ENCODE measurements at regions of chr1 and their contacts with region 1.

Region 1: DNA sequence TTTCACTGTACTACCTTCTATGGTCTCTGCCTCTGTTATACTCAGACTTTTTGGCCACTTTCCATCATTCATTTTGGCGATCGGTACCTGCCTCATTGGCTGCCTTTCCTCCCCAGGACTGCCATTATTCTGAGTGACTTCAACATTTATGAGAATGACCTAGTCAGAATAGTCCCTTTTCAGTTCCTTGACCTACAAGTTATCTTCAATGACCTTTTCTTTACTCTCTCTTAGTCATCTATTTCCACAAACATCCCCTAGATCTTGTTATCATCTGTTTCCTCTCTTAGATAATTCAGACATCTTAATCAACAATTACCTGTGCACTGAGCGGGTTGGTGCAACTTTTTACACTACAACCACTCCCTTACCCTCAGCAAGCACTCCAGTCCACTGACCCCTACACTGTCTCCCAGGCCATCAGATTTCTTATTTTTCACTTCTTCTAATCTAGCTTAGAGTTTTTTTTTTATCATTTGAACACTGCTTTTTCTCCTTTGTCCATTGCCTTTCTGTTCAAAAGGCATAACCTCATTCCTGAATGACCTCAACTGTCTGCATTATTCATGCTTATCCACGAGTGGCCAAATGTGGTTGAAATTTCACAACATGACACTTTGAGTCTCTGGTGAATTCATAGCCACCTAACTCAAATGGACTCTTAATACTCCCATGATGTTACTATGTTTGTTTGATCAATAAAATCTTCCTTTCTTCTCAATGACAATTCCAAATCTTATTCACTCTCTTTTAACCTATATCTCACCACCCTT is 112.7 kb downstream of the HMCN1 start:
- DNase-seq: no peak
- ATAC-seq: peak in 1 of 4 donors; percentile 27
- H3K4me3 ChIP-seq: no peak overlapping the region
- H3K27ac ChIP-seq: no peak overlapping the region
- H3K4me1 ChIP-seq: peaks cover 0 to 20% (median 0%) of the 10 kb centered on the region in 12 donors
- H3K27me3 ChIP-seq: no peaks in the 10 kb centered on the region
- CTCF ChIP-seq: no peak
- POLR2A ChIP-seq: no peak

Region 2: DNA sequence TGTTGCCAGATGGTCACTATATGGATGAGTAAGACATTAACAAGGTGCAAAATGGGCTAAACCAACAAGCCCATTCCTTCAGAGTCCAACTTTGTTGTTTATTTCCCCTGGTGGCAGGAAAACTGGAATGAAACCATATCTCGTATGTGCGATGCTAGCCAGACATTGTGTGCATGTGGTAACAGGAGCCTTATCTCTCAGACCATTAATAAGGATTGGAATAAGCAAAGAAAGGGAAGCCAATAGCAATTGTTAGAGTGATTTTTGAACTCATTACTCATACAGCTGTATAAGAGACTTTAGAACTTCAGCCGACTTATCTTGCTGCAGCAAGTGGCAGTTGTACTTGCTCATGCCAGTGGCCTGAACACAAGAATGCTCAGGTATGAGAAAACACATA is 142.7 kb before region 1 on chr1:
- intact Hi-C with region 1: no loop called
- DNase-seq: no peak
- ATAC-seq: no peak
- H3K4me3 ChIP-seq: no peak overlapping the region
- H3K27ac ChIP-seq: no peak overlapping the region
- H3K4me1 ChIP-seq: no peaks in the 10 kb centered on the region
- H3K27me3 ChIP-seq: no peaks in the 10 kb centered on the region
- CTCF ChIP-seq: no peak
- POLR2A ChIP-seq: no peak

Region 3: DNA sequence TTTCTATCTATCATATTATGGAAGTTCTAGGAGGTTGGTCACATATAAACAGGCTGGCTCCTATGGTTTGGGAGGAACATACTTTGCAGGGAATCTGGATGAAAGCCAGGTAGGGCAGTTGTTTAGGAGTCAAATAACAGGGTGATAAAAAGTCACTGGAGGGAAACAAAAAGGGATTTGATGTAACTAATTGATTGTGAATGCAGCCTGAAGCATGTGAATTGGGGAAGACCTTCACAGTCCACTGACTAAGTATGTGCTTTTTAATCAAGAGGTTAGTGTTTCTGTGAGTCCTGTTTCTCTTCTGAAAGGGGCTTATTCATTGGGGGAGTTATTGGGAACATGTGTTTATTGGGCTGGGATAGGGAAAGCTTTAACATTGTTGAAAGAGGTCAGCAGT is 71.4 kb before region 1 on chr1:
- intact Hi-C with region 1: no loop called
- DNase-seq: no peak
- ATAC-seq: no peak
- H3K4me3 ChIP-seq: no peak overlapping the region
- H3K27ac ChIP-seq: no peak overlapping the region
- H3K4me1 ChIP-seq: no peaks in the 10 kb centered on the region
- H3K27me3 ChIP-seq: no peaks in the 10 kb centered on the region
- CTCF ChIP-seq: no peak
- POLR2A ChIP-seq: no peak

Region 4: DNA sequence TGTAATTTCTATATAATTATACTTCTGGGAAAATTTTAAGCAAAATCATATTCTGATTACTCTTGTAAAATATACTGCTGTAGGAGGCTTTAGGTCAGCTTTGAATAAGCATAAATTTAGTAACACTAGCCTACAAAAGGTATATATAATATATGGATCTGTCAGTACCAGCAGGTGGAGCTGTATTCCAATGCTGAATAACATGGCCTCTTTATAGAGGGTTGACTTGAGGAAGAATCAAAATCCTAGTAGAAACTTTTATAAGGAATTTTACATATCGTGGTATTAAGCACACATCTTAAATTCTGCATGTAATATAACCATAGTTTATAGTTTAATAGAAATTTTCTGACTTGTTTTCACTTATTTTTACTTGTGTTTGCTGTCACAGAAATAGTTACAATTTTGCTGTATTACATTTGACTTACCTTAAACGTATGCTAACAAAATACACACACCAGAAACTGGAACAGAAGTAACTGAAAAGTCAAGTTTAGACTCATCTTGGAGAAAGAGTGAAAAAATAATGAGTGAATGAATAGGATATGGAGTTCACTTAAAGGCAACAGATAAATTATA is 33.4 kb before region 1 on chr1:
- intact Hi-C with region 1: no loop called
- DNase-seq: no peak
- ATAC-seq: no peak
- H3K4me3 ChIP-seq: no peak overlapping the region
- H3K27ac ChIP-seq: no peak overlapping the region
- H3K4me1 ChIP-seq: peaks cover 0 to 7% (median 0%) of the 10 kb centered on the region in 12 donors
- H3K27me3 ChIP-seq: no peaks in the 10 kb centered on the region
- CTCF ChIP-seq: peak; percentile 33 to 74 (median 52)
- POLR2A ChIP-seq: no peak

Region 5: DNA sequence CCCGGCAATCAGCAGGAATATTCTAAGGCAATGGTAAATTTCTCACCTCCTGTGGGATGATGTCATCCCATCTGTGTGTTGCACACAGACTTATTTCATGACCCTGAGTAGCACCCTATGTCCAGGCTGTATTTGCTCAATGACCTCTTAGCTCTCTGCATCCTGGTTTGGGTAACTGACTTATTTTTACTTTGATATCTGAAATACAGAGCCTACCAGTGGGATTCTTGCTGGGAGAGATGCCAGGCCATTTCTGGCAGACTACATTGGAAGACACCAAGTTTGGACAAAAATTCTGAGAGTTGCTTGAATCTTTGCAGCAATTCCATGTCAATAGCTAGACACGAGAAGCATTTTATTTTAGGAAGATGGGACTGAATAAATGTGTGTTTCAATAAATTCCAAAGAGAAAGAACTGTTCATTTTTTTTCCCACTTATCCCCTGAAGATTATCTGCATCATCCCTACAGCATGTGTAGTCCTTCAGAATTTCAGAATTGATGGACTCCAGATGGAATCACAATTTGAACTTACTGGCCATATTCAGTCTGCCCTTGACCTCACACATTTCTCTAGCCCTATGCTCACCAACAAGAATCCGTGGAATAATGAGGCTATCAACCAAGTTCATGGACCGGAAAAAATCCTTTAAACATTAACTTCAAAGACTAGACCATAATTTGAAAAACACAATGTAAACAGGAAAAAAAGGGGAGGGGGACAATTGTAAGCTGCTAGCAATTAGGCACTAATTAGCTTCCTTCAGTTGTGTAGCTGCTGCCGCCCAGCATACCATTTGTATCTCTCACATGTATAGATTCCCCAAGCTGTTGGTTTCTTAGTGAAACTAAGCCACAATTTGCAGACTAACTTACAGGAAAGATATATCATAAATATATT is 113.8 kb after region 1 on chr1:
- intact Hi-C with region 1: loop called in 1 of 10 experiments (anchors 10 kb)
- DNase-seq: peak in 4 of 5 donors; percentile 36 to 76 (median 72)
- ATAC-seq: peak; percentile 53 to 90 (median 85)
- H3K4me3 ChIP-seq: no peak overlapping the region
- H3K27ac ChIP-seq: peak overlapping the region in 8 of 12 donors; percentile 29 to 59 (median 46)
- H3K4me1 ChIP-seq: peaks cover 0 to 58% (median 14%) of the 10 kb centered on the region in 12 donors
- H3K27me3 ChIP-seq: no peaks in the 10 kb centered on the region
- CTCF ChIP-seq: no peak
- POLR2A ChIP-seq: no peak

Measured in heart left ventricle (tissue), 16 donors.